HEK293 (cell line): ENCODE measurements at regions of chr1 and their contacts with region 1.

Region 1: DNA sequence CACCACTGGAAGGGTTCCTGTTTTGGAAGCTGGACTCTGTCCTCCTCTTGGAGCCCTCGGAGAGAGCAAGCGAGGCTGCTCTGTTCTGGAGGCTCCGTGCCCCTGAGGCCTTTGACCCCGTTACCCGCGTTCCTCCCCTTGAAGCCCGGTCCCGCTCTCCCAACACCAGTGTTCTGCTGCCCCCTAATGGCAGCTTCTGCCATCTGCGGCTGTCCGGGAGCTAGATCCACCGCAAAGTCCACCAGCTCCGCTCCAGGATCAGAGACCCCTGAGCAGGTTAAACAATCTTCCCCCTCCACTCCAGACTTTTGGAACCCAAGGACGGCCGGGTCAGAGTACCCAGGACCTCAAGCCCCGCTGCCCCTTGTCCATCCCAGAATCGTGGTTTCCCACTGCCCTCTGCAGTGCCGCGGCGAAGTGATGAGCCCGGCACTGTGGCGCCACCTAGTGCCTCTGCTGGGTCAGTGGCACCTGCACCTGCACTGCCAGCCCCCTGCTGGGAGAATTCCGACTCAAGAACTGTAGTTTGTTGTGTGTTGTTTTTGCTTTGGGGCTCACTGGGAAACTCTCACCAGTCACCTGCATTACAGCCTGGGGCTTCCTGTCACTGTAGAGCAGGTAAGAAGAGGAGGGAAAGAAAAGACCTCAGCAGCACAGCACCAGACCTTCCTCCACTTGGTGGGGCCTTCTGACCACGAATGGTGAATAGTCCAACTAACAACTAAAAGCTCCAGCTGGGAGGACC is 63.5 kb upstream of the NFASC start:
- H3K4me3 ChIP-seq: peak overlapping the region; percentile 62
- H3K27ac ChIP-seq: no peak overlapping the region
- H3K4me1 ChIP-seq: no peaks in the 10 kb centered on the region
- CTCF ChIP-seq: peak; percentile 99

Region 2: GRCh38 chr1:204335085-204335484 is 472.0 kb before region 1 on chr1:
- CTCF ChIA-PET with region 1: no interaction called
- POLR2A ChIA-PET with region 1: no interaction called
- H3K4me3 ChIP-seq: no peak overlapping the region
- H3K27ac ChIP-seq: no peak overlapping the region
- H3K4me1 ChIP-seq: peaks cover 3% of the 10 kb centered on the region
- CTCF ChIP-seq: no peak

Region 3: DNA sequence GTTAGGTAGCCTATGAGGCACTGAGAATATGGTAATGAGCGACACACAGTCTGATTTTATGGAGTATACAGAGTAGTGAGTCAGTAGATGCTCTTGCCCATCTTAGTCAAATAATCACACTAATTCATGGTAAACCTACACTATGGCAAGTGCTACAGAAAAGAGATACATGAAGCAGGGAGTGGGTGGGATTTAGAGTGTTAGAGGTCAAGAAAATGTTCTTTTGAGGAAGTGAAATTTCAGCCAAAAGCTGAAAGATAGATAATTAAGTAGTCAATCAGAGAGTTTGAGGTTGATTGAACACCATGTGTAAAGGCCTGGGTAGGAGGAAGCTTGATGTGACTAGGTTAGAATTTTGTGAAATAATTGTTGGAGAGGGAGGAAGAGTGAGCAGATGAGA is 276.2 kb before region 1 on chr1:
- CTCF ChIA-PET with region 1: interaction called, 13 read pairs
- POLR2A ChIA-PET with region 1: no interaction called
- H3K4me3 ChIP-seq: no peak overlapping the region
- H3K27ac ChIP-seq: no peak overlapping the region
- H3K4me1 ChIP-seq: no peaks in the 10 kb centered on the region
- CTCF ChIP-seq: no peak

Region 4: GRCh38 chr1:204623894-204624361 is 183.2 kb before region 1 on chr1:
- CTCF ChIA-PET with region 1: interaction called, 13 read pairs
- POLR2A ChIA-PET with region 1: no interaction called
- H3K4me3 ChIP-seq: no peak overlapping the region
- H3K27ac ChIP-seq: no peak overlapping the region
- H3K4me1 ChIP-seq: no peaks in the 10 kb centered on the region
- CTCF ChIP-seq: peak; percentile 75

Region 5: GRCh38 chr1:204782118-204782700 is 24.9 kb before region 1 on chr1:
- CTCF ChIA-PET with region 1: interaction called, 26 read pairs
- POLR2A ChIA-PET with region 1: no interaction called
- H3K4me3 ChIP-seq: no peak overlapping the region
- H3K27ac ChIP-seq: no peak overlapping the region
- H3K4me1 ChIP-seq: no peaks in the 10 kb centered on the region
- CTCF ChIP-seq: no peak

Region 6: DNA sequence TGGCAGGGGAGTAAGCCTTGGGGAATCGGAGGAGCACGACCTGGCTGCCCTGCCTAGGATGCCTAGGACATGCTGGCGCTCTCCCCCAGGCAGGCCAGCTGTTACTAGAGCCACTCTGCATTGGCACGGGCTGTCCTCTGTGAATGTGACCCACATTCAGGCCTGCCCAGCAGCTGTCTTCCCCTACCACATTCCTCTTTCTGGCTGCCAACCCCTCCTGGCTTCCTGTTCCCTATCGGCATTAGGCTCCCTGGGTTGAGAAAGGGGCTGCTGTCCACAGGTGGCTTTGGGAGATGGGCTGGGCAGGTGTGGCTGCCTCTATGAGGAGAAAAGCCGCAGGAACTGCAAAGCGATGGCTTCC is 61.2 kb after region 1 on chr1:
- CTCF ChIA-PET with region 1: interaction called, 19 read pairs
- POLR2A ChIA-PET with region 1: no interaction called
- H3K4me3 ChIP-seq: no peak overlapping the region
- H3K27ac ChIP-seq: no peak overlapping the region
- H3K4me1 ChIP-seq: no peaks in the 10 kb centered on the region
- CTCF ChIP-seq: no peak

Region 7: GRCh38 chr1:204961765-204962419 is 154.8 kb after region 1 on chr1:
- CTCF ChIA-PET with region 1: interaction called, 24 read pairs
- POLR2A ChIA-PET with region 1: no interaction called
- H3K4me3 ChIP-seq: no peak overlapping the region
- H3K27ac ChIP-seq: no peak overlapping the region
- H3K4me1 ChIP-seq: no peaks in the 10 kb centered on the region
- CTCF ChIP-seq: no peak

Region 8: GRCh38 chr1:206106328-206107167 is 1299.4 kb after region 1 on chr1:
- CTCF ChIA-PET with region 1: no interaction called
- POLR2A ChIA-PET with region 1: no interaction called
- H3K4me3 ChIP-seq: no peak overlapping the region
- H3K27ac ChIP-seq: no peak overlapping the region
- H3K4me1 ChIP-seq: no peaks in the 10 kb centered on the region
- CTCF ChIP-seq: peak; percentile 81